ENCODE measurements at regions of chr15 and their contacts with region 1.

Region 1: GRCh38 chr15:64667736-64668161 is 107.6 kb downstream of the RBPMS2 start:
- DNase-seq: no peak
- H3K4me3 ChIP-seq: no peak overlapping the region
- H3K27ac ChIP-seq: peak overlapping the region in 2 of 59 donors; percentile 9 to 17
- H3K27me3 ChIP-seq: no peaks in the 10 kb centered on the region
- CTCF ChIP-seq: no peak

Region 2: DNA sequence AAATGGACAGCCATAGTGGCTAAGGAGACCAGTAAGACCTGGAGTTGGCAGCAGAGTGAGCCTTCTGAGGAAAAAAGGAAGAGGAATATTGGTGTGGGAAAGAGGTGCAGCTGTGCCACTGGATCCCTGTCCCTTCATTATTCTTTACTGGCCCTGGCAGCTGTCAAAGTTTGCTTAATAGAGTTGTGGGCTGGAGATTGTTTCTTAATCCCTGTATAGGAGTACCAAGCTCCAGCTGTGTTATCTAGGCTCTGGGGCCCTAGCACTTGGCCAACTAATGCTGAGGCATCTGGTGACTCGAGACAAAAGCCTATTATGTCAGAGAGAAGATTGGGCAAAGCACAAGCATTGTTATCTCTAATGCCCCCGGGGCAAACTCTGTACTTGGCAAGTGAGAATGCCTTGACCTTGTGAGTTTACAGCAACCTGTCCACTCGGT is 146.0 kb before region 1 on chr15:
- intact Hi-C with region 1: loop called in 1 of 2 experiments (anchors 10 kb)
- DNase-seq: peak; percentile 11 to 90 (median 68)
- H3K4me3 ChIP-seq: peak overlapping the region in 16 of 59 donors; percentile 1 to 35 (median 16)
- H3K27ac ChIP-seq: peak overlapping the region; percentile 62 to 99 (median 91)
- H3K27me3 ChIP-seq: no peaks in the 10 kb centered on the region
- CTCF ChIP-seq: peak in 2 of 56 donors; percentile 6 to 12